Mammary epithelial cell (primary cell): ENCODE measurements at regions of chr12 and their contacts with region 1.

Region 1: DNA sequence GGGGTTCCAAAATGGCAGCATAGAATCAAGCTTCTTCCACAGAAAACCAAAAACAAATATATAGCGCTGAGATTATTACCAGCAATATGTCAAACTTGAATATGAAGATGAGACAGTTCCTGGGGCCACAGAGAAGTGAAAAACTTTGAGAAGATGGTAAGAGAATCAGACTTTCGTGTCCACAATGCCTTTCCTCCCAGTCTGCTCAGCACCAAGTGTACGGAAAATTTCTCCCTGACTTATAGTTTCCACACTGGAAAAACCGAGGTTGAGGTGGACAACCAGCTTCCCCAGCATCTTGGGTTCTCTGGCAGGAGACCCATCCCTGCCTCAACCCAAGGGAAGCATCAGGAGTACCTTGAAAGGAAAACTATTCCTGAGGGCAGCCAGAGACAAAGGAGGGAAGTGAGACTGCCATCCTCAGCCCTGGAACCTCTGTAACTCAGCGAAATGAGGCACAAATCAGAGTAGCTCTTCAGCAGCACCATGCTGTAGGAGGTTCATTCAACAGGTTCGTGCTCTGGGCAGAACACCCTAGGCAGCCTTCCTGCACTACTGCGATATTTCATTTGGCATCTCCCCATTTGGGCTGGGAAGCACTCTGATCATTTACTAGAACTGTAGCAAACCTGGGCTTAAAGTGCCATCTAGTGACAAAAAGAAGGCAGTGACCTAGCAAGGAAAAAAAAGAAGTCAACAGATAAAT is 52.4 kb upstream of the CAPRIN2 start:
- DNase-seq: peak; percentile 54
- H3K4me3 ChIP-seq: no peak overlapping the region
- H3K27ac ChIP-seq: no peak overlapping the region
- H3K4me1 ChIP-seq: peaks cover 14% of the 10 kb centered on the region
- H3K27me3 ChIP-seq: no peaks in the 10 kb centered on the region
- CTCF ChIP-seq: peak; percentile 70 to 76

Region 2: DNA sequence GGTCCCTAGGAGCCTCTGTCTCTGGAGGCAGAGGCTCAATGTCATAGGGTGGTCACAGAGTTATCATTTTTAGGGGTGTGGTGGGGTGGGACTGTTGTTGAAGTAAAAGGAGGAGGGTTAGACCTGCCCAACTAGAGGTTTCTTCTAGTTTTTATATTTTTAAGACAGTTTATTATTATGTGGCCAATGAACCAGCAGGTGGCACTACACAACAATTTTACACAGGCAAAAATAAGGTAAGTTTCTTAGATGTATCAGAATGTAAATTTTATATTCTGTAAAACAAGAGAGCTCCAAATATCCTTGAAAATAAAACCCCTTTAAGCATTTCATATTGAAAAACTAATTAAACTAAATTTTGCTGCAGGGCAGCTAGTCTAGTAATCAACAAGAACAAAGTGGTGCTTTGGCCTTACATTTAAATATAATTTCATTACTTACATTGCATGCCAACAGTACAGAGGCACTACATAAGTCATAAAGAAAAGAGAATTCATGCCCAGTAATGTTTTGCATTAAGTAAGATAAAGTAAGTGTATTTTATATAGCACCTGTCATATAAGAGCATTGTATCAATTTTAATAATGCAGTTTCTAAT is 1287.5 kb before region 1 on chr12:
- CTCF ChIA-PET with region 1: no interaction called
- dilution Hi-C with region 1: no loop called
- in situ Hi-C with region 1: no loop called
- intact Hi-C with region 1: loop called (anchors 5 kb)
- DNase-seq: peak; percentile 24
- H3K4me3 ChIP-seq: no peak overlapping the region
- H3K27ac ChIP-seq: no peak overlapping the region
- H3K4me1 ChIP-seq: no peaks in the 10 kb centered on the region
- H3K27me3 ChIP-seq: no peaks in the 10 kb centered on the region
- CTCF ChIP-seq: peak; percentile 31 to 54

Region 3: GRCh38 chr12:29782285-29782870 is 1024.8 kb before region 1 on chr12:
- CTCF ChIA-PET with region 1: no interaction called
- dilution Hi-C with region 1: no loop called
- in situ Hi-C with region 1: no loop called
- intact Hi-C with region 1: loop called (anchors 10 kb)
- DNase-seq: peak; percentile 77
- H3K4me3 ChIP-seq: peak overlapping the region; percentile 77 to 95 (median 92)
- H3K27ac ChIP-seq: peak overlapping the region; percentile 90
- H3K4me1 ChIP-seq: peaks cover 6% of the 10 kb centered on the region
- H3K27me3 ChIP-seq: no peaks in the 10 kb centered on the region
- CTCF ChIP-seq: no peak

Region 4: GRCh38 chr12:30695199-30696103 is 111.7 kb before region 1 on chr12 and contains the start of gene IPO8:
- CTCF ChIA-PET with region 1: no interaction called
- dilution Hi-C with region 1: no loop called
- in situ Hi-C with region 1: no loop called
- intact Hi-C with region 1: loop called (anchors 1 kb)
- DNase-seq: peak; percentile 90
- H3K4me3 ChIP-seq: peak within 1 kb of the TSS; percentile 68 to 99 (median 76)
- H3K27ac ChIP-seq: peak within 1 kb of the TSS; percentile 55
- H3K4me1 ChIP-seq: peaks cover 24% of the 10 kb centered on the region
- H3K27me3 ChIP-seq: no peaks in the 10 kb centered on the region
- CTCF ChIP-seq: peak in 1 of 2 donors; percentile 47
- total RNA-seq, gene IPO8: 21.5 to 40.7 TPM

Region 5: DNA sequence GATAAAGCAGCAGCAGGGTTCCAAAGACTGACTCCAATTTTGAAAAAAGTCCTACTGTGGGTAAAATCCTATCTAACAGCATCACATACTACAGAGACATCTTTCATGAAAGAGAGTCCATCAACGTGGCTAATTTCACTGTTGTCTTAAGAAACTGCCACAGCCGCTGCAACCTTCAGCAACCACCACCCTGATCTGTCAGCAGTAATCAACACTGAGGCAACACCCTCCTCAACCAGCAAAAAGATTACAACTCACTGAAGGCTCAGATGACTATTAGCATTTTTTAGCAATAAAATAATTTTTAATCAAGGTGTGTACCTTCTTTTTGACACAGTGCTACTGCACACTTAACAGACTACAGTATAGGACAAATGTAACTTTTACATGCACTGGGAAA is 59.0 kb before region 1 on chr12:
- CTCF ChIA-PET with region 1: no interaction called
- dilution Hi-C with region 1: no loop called
- in situ Hi-C with region 1: no loop called
- intact Hi-C with region 1: no loop called
- DNase-seq: no peak
- H3K4me3 ChIP-seq: no peak overlapping the region
- H3K27ac ChIP-seq: no peak overlapping the region
- H3K4me1 ChIP-seq: peaks cover 10% of the 10 kb centered on the region
- H3K27me3 ChIP-seq: no peaks in the 10 kb centered on the region
- CTCF ChIP-seq: no peak